ENCODE measurements at regions of chr18 and their contacts with region 1.

Region 1: DNA sequence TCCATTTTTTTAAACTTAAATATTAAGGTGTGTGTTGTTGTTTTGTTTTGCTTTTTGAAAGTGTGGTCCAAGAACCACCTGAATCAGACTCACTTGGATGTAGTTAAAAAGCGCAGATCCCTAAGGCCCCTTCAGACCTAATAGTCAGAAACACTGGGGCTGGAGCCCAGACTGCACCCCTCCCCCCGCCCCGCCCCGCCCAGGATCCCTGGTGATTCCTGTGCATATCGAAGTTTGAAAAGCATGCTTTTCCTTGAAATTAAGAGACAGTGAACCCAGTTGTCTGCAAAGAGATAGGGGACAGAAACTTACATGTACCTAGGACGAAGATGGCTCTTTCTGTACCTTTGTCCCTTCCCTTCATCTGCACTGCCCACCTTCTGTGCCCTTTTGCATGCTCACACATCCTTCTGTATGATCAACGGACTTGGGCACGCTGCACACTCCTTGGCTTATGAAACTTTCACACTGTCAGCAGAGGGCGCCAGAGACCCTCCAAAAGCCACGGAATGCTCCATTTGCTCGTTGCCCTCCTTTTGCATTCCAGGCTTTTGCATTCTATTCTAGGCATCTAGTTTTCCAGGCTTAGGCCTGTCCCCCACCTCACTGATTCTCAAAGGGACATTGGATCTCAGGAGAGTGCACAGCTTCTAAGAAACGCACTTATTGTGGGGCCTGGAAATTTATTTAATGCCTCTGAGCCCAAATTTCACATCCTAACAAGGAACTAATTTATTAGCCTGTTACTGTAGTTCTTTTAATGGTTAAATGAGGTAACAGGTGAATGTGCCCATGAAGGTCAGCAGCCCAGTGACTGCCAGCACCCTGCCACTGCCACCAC is 32.8 kb upstream of the SLC14A1 start:
- DNase-seq: peak; percentile 67 to 84 (median 74)
- ATAC-seq: peak in 3 of 4 donors; percentile 88 to 92 (median 90)
- H3K4me3 ChIP-seq: no peak overlapping the region
- H3K27ac ChIP-seq: no peak overlapping the region
- H3K4me1 ChIP-seq: peaks cover 0 to 27% (median 0%) of the 10 kb centered on the region in 12 donors
- H3K27me3 ChIP-seq: peaks cover 0 to 6% (median 0%) of the 10 kb centered on the region in 9 donors
- CTCF ChIP-seq: peak; percentile 76 to 88 (median 82)
- POLR2A ChIP-seq: no peak

Region 2: DNA sequence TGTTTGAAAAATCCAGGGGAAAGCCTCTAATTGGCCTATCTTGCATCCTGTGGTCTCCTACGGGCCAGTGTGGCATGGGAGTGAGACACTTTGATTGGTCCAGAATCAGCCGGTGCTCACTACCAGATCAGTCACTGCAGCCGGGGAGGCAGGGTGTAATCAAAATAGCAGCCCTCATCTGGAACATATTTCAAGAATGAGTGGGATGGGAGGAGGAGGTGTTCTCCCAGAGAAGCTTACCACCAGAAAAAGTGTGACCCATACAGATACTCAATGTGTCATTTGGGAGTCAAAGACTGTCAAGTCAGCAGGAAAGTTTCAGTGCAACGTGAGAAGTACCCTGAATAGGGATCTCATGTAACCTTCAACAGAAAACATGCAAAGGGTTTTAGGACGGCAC is 469.8 kb before region 1 on chr18:
- intact Hi-C with region 1: no loop called
- DNase-seq: no peak
- ATAC-seq: peak in 1 of 4 donors; percentile 42
- H3K4me3 ChIP-seq: no peak overlapping the region
- H3K27ac ChIP-seq: no peak overlapping the region
- H3K4me1 ChIP-seq: no peaks in the 10 kb centered on the region
- H3K27me3 ChIP-seq: no peaks in the 10 kb centered on the region
- CTCF ChIP-seq: no peak
- POLR2A ChIP-seq: no peak

Region 3: GRCh38 chr18:45628968-45629958 is 61.9 kb before region 1 on chr18:
- intact Hi-C with region 1: no loop called
- DNase-seq: no peak
- ATAC-seq: no peak
- H3K4me3 ChIP-seq: no peak overlapping the region
- H3K27ac ChIP-seq: no peak overlapping the region
- H3K4me1 ChIP-seq: peaks cover 0 to 13% (median 0%) of the 10 kb centered on the region in 12 donors
- H3K27me3 ChIP-seq: peaks cover 0 to under 1% (median 0%) of the 10 kb centered on the region in 9 donors
- CTCF ChIP-seq: no peak
- POLR2A ChIP-seq: no peak

Region 4: GRCh38 chr18:45664824-45665763 is 26.1 kb before region 1 on chr18:
- intact Hi-C with region 1: loop called in 1 of 10 experiments (anchors 2 kb)
- DNase-seq: peak in 3 of 5 donors; percentile 42 to 52 (median 43)
- ATAC-seq: peak; percentile 43 to 76 (median 68)
- H3K4me3 ChIP-seq: no peak overlapping the region
- H3K27ac ChIP-seq: peak overlapping the region in 2 of 12 donors; percentile 57 to 61
- H3K4me1 ChIP-seq: peaks cover 0 to 34% (median 16%) of the 10 kb centered on the region in 12 donors
- H3K27me3 ChIP-seq: no peaks in the 10 kb centered on the region
- CTCF ChIP-seq: peak; percentile 89 to 95 (median 92)
- POLR2A ChIP-seq: no peak

Region 5: DNA sequence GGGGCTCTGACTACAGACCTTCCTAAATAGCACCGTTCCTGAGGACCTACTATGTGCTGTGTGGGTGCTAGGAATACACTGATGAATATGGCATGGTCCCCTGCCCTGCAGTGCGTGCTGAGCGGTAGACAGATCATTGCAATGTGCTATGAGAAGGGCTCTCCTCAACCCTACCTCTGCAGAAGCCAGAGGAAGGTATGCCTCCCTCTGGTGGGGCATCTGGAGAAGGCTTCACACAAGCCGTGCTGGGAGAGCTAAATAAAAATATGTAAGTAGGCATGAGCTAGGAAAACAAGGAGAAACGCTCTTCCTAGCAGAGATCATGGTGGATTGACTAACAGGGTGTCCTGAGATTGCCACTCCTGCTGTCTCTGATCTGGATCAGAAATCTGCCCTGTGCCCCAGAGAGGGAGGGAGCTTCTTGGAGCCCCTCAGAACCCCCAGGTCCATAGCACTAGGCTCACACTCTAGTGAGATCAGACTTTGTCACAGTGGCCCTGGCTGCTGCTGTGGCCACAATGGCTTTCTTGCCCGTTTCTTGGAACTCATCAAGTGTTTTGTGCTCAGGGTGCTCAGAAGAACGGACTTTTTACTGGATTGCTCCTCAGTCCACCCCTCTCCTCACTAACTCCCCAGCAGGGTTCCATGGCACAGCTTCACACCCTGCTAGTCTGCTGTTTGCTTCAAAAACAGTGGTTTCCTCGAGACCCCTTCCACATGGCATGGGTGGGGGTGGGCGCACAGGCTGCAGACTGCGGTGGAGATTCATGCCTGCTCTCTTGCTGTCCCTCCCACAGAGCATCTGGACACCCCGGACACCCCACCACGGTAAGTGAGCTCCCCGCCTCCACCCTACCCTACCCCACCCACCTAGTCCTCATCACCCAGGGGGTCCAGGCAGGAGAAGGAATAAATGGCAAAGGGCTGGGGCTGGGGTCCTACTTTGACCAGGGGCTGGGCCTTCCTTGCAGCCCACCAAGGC is 148.5 kb after region 1 on chr18:
- intact Hi-C with region 1: loop called in 7 of 10 experiments (anchors 1 to 10 kb)
- DNase-seq: no peak
- ATAC-seq: peak; percentile 13 to 83 (median 78)
- H3K4me3 ChIP-seq: no peak overlapping the region
- H3K27ac ChIP-seq: no peak overlapping the region
- H3K4me1 ChIP-seq: peaks cover 0 to 27% (median 14%) of the 10 kb centered on the region in 12 donors
- H3K27me3 ChIP-seq: peaks cover 7 to 39% (median 30%) of the 10 kb centered on the region in 9 donors
- CTCF ChIP-seq: peak; percentile 41 to 68 (median 54)
- POLR2A ChIP-seq: no peak

Region 6: GRCh38 chr18:45879681-45880655 is 188.8 kb after region 1 on chr18:
- intact Hi-C with region 1: loop called (anchors 1 to 5 kb)
- DNase-seq: peak; percentile 64 to 87 (median 68)
- ATAC-seq: peak; percentile 81 to 95 (median 92)
- H3K4me3 ChIP-seq: no peak overlapping the region
- H3K27ac ChIP-seq: no peak overlapping the region
- H3K4me1 ChIP-seq: peaks cover 0 to 6% (median 2%) of the 10 kb centered on the region in 12 donors
- H3K27me3 ChIP-seq: no peaks in the 10 kb centered on the region
- CTCF ChIP-seq: peak; percentile 98 to 100 (median 99)
- POLR2A ChIP-seq: no peak

Region 7: GRCh38 chr18:45974088-45974536 is 282.9 kb after region 1 on chr18:
- intact Hi-C with region 1: loop called in 6 of 10 experiments (anchors 2 to 10 kb)
- DNase-seq: peak in 4 of 5 donors; percentile 27 to 48 (median 41)
- ATAC-seq: peak; percentile 63 to 87 (median 78)
- H3K4me3 ChIP-seq: no peak overlapping the region
- H3K27ac ChIP-seq: peak overlapping the region in 1 of 12 donors; percentile 32
- H3K4me1 ChIP-seq: peaks cover 0 to 6% (median 0%) of the 10 kb centered on the region in 12 donors
- H3K27me3 ChIP-seq: no peaks in the 10 kb centered on the region
- CTCF ChIP-seq: peak; percentile 54 to 78 (median 66)
- POLR2A ChIP-seq: no peak

Region 8: GRCh38 chr18:46067431-46068007 is 376.3 kb after region 1 on chr18:
- intact Hi-C with region 1: loop called in 5 of 10 experiments (anchors 5 to 10 kb)
- DNase-seq: no peak
- ATAC-seq: no peak
- H3K4me3 ChIP-seq: no peak overlapping the region
- H3K27ac ChIP-seq: no peak overlapping the region
- H3K4me1 ChIP-seq: peaks cover 0 to 50% (median 10%) of the 10 kb centered on the region in 12 donors
- H3K27me3 ChIP-seq: no peaks in the 10 kb centered on the region
- CTCF ChIP-seq: no peak
- POLR2A ChIP-seq: no peak

Measured in heart left ventricle (tissue), 16 donors.